ENCODE measurements at regions of chr14 and their contacts with region 1.

Region 1: DNA sequence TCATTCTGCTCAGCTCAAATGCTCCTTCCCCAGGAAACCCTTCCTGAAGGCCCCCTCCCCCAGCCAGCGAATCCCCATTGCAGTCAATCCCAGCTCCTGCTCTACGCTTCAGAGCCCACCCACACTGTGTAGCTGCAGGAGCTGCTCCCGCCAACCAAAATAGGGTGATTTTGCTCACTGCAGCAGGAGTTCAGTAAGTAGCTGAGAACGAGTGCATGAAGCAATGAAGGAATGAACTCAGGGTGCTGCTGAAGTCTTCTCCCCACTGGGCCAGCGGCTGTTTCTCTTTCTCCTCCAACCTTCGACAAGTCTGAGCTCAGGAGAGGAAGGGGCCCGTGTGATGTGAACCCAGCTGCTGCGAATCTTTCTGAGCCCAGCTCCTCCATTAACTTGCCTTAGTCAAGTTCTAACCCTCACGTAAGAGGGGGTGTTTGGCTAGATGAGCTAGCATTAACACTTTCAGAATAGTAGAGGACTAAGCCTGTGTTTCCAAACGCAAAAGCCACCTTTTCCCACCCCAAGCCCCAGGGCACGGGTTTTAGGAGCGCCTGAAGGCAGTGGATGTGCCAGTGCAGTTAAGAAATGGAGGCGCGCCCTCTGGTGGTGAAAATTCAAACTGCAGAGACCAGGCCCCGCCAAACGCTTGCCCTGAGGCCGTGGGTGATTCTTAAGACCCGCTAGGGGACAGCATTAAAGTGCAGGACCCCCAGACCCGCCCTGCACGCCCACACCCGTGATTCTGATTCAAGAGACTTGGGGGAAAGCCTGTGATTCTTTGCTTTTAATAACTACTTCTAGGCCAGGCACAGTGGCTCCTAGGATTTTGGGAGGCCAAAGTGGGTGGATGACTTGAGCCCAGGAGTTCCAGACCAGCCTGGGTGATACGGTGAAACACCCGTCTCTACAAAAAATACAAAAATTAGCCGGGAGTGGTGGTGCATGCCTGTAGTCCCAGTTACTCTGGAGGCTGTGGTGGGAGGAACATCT is 11.9 kb upstream of the SERPINA4 start:
- DNase-seq: peak; percentile 6
- H3K4me3 ChIP-seq: no peak overlapping the region
- H3K27ac ChIP-seq: no peak overlapping the region
- H3K27me3 ChIP-seq: peaks cover 2% of the 10 kb centered on the region
- CTCF ChIP-seq: peak; percentile 90

Region 2: GRCh38 chr14:94110552-94111181 is 438.6 kb before region 1 on chr14 and contains the start of gene IFI27:
- CTCF ChIA-PET with region 1: no interaction called
- POLR2A ChIA-PET with region 1: no interaction called
- DNase-seq: no peak
- H3K4me3 ChIP-seq: no peak within 1 kb of the TSS
- H3K27ac ChIP-seq: no peak within 1 kb of the TSS
- H3K27me3 ChIP-seq: peaks cover 2% of the 10 kb centered on the region
- CTCF ChIP-seq: no peak
- polyA plus RNA-seq, gene IFI27: 0.94 and 1.4 TPM in 2 replicates

Region 3: GRCh38 chr14:94439453-94440057 is 109.7 kb before region 1 on chr14:
- CTCF ChIA-PET with region 1: interaction called, 35 read pairs
- POLR2A ChIA-PET with region 1: no interaction called
- DNase-seq: no peak
- H3K4me3 ChIP-seq: no peak overlapping the region
- H3K27ac ChIP-seq: no peak overlapping the region
- H3K27me3 ChIP-seq: no peaks in the 10 kb centered on the region
- CTCF ChIP-seq: no peak

Region 4: DNA sequence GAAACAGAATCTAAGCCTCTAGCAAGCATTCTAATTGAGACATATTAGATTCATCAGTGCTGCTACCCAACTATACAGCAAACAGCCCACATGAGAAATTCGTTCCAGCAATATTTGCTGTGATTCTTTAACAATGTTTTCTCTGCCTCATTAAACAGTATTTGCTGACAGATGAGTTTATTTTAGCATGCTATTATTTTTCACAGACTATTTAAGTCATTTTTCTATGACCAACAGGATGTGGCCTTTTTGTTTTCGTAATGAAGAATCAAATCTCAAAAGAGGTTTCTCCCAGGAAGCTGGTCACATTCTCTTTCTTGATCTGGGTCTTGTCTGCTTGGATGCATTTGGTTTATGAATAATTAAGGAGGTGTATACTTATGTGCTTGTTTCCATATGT is 16.8 kb before region 1 on chr14:
- CTCF ChIA-PET with region 1: interaction called, 30 read pairs
- POLR2A ChIA-PET with region 1: no interaction called
- DNase-seq: no peak
- H3K4me3 ChIP-seq: no peak overlapping the region
- H3K27ac ChIP-seq: no peak overlapping the region
- H3K27me3 ChIP-seq: peaks cover 2% of the 10 kb centered on the region
- CTCF ChIP-seq: no peak

Region 5: GRCh38 chr14:94728950-94729349 is 179.7 kb after region 1 on chr14:
- CTCF ChIA-PET with region 1: no interaction called
- POLR2A ChIA-PET with region 1: no interaction called
- DNase-seq: no peak
- H3K4me3 ChIP-seq: no peak overlapping the region
- H3K27ac ChIP-seq: no peak overlapping the region
- H3K27me3 ChIP-seq: peaks cover 3% of the 10 kb centered on the region
- CTCF ChIP-seq: no peak

Measured in AG04450 (cell line).